ENCODE measurements at regions of chr15 and their contacts with region 1.

Region 1: DNA sequence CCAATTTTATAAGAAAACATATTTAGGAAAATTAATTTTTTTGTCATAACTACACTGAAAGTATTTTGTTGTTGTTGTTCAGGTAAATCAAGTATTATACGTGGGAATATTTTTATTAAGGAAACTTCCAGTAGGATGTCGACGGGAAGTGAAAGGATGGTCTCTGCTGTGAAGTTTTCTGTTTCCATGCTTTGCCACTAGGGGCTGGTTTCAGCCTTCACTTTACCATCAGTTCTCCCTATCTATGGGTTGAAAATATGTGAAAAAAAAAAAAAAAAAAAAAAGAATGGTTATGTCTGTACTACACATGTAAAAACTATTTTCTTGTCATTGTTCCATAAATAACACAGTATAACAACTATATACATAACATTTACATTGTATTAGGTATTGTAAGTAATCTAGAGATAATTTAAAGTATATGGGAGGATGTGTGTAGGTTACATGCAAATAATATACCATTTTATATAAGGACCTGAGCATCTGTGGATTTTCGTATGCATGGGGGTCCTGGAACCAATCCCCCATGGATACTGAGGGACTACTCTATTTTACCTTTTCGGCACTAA is 136.7 kb downstream of the SMAD6 start:
- DNase-seq: no peak
- ATAC-seq: no peak

Region 2: GRCh38 chr15:66196602-66197001 is 642.2 kb before region 1 on chr15:
- intact Hi-C with region 1: no loop called
- DNase-seq: no peak
- ATAC-seq: no peak

Region 3: DNA sequence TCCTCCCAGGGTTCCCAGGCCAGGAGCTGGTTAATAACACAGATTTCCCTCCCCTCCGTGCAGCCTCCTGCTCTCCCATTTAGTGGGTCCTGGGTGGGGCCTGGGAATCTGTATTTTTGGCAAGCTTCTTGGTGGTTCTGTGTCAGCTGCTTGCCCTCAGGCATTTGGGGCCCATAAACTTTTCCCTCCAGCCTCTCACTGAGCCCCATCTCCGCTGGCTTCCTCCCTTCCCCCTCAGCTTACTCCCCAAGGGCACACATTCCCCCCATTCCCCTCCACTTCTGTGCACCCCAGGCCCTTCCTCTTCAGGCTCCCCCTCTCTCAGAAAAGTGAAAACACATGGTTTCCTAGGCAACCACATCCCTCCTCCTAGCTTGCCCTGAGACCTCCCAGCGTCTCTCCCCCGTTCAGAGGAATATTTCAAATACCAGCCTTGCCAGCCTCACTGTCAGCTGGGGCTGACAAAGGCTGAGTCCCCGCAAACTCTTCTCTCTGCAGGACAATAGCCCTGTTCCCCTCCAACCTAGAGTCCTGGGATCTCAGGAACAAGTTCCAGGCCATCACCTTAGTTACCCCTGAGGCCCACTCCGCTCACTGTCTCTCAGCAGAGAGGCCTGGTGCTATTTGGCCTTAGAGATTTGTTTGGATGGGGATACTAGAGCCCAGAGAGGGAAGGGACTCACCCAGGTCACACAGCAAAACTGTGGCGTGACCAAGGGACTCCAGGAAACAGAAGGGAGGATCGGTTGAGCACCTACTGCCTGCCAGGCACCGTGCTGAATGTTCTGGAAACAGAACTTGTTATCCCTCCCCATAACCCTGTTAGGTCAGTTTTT is 181.4 kb before region 1 on chr15:
- intact Hi-C with region 1: no loop called
- DNase-seq: no peak
- ATAC-seq: no peak

Region 4: GRCh38 chr15:66789029-66790025 is 49.4 kb before region 1 on chr15:
- intact Hi-C with region 1: loop called (anchors 5 kb)
- DNase-seq: peak; percentile 63
- ATAC-seq: peak; percentile 81

Region 5: DNA sequence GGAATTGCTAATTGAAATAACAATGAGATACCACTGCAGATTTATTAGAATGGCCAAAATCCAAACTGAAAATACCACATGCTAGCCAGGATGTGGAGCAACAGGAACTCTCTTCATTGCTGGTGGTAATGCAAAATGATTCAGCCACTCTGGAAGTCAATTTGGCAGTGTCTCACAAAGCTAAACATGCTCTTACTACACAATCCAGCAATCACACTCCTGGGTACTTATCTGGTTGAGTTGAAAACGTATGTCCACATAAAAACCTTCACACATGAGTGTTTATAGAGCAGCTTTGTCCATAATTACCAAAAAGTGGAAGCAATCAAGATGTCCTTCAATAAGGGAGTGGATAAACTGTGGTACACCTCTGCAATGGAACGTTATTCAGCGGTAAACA is 23.4 kb before region 1 on chr15:
- intact Hi-C with region 1: no loop called
- DNase-seq: no peak
- ATAC-seq: no peak

Measured in Right ventricle myocardium superior (tissue), 1 donor.